Heart left ventricle (tissue), 16 donors: ENCODE measurements at regions of chr21 and their contacts with region 1.

Region 1: DNA sequence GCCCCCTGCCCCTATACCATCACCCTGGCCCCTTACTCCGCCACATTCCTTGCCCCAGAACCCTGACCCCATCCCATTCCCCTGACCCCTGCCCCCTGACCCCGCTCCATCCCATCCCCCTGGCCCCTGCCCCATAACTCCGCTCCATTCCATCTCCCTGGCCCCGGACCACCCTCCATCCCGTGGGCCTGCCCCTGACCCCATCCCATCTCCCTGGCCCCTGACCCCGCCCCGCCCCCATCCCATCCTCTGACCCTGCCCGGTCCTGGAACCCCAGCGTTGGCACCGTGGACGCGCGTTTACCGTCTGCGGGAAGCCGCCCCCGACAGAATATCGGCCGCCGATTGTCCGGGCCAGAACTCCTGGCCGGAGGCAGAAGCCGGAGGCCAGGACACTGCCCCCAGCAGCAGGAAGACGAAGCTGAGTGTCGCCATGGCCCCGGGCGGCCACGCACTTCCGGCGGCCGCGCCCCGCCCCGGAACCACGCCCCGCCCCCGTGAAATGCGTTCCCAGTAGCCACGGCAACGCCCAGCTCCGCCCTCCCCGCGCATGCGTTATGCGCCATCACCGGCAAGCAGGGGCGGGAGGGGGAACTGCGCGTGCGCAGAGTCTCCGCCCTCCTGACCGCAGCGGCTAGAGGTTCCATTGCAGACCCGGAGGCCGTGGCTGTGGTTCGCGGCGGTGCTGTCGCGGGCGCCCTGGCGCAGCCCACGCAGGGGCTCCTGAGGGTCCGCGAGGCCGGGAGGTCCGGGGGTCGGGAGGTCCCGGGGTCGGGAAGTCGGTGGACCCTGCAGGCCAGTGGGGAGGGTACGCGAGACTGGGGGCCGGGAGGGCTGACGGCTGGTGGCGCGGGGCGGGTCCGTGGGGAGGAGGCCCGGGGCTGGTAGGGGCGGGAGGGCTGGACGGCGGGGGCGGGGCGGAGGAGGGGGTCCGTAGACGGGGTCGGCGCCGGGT is at the start of gene POFUT2:
- DNase-seq: peak; percentile 97 to 99 (median 97)
- ATAC-seq: peak; percentile 83 to 93 (median 89)
- H3K4me3 ChIP-seq: peak within 1 kb of the TSS; percentile 47 to 91 (median 76)
- H3K27ac ChIP-seq: peak within 1 kb of the TSS; percentile 50 to 90 (median 80)
- H3K4me1 ChIP-seq: peaks cover 0 to 38% (median 25%) of the 10 kb centered on the region in 12 donors
- H3K27me3 ChIP-seq: no peaks in the 10 kb centered on the region
- CTCF ChIP-seq: no peak
- POLR2A ChIP-seq: peak; percentile 37 to 88
- total RNA-seq, gene POFUT2: 10.8 to 22.0 (median 18.5) TPM

Region 2: DNA sequence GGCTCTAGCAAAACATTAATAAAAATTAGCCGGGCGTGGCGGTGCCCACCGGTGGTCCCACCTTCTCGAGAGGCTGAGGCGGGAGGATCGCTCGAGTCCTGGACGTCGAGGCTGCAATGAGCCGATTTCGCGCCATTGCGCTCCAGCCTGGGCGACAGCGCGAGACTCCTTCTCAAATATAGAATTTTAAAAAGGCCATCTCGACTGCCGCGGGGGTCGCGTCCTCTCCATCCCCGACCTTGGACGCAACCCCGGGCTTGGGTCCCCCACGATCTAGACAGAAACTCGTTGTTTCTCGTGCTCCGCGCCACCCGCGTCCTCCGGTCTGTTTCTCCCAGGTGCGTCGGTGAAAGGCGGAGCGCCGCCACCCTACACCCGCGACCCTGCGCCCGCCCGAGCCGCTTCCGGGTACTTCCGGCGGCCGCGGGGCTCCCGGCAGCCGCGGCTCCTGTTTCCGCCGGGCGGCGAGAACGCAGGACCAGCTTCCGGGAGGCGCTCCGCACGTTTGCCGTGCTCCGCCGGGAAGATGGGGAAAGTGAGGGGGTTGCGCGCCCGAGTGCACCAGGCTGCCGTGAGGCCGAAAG is 348.1 kb before region 1 on chr21 and contains the start of gene SLX9:
- intact Hi-C with region 1: loop called in 1 of 10 experiments (anchors 10 kb)
- DNase-seq: peak; percentile 72 to 90 (median 83)
- ATAC-seq: peak; percentile 58 to 92 (median 87)
- H3K4me3 ChIP-seq: peak within 1 kb of the TSS; percentile 74 to 99 (median 82)
- H3K27ac ChIP-seq: peak within 1 kb of the TSS; percentile 9 to 88 (median 78)
- H3K4me1 ChIP-seq: peaks cover 0 to 37% (median 29%) of the 10 kb centered on the region in 12 donors
- H3K27me3 ChIP-seq: peaks cover 0 to 5% (median 0%) of the 10 kb centered on the region in 9 donors
- CTCF ChIP-seq: no peak
- POLR2A ChIP-seq: peak in 1 of 2 donors; percentile 70
- total RNA-seq, gene SLX9: 38.5 to 53.1 (median 47.1) TPM

Region 3: GRCh38 chr21:45372732-45373355 is 85.1 kb after region 1 on chr21:
- intact Hi-C with region 1: no loop called
- DNase-seq: peak in 3 of 5 donors; percentile 8 to 46 (median 25)
- ATAC-seq: no peak
- H3K4me3 ChIP-seq: no peak overlapping the region
- H3K27ac ChIP-seq: no peak overlapping the region
- H3K4me1 ChIP-seq: peaks cover 0 to 7% (median 0%) of the 10 kb centered on the region in 12 donors
- H3K27me3 ChIP-seq: no peaks in the 10 kb centered on the region
- CTCF ChIP-seq: no peak
- POLR2A ChIP-seq: no peak

Region 4: GRCh38 chr21:45386721-45387371 is 99.1 kb after region 1 on chr21:
- intact Hi-C with region 1: loop called in 2 of 10 experiments (anchors 5 kb)
- DNase-seq: peak; percentile 36 to 70 (median 58)
- ATAC-seq: peak; percentile 48 to 73 (median 68)
- H3K4me3 ChIP-seq: no peak overlapping the region
- H3K27ac ChIP-seq: peak overlapping the region in 9 of 12 donors; percentile 5 to 56 (median 34)
- H3K4me1 ChIP-seq: peaks cover 0 to 21% (median 17%) of the 10 kb centered on the region in 12 donors
- H3K27me3 ChIP-seq: no peaks in the 10 kb centered on the region
- CTCF ChIP-seq: peak in 10 of 12 donors; percentile 15 to 52 (median 39)
- POLR2A ChIP-seq: no peak

Region 5: GRCh38 chr21:45542242-45542666 is 254.5 kb after region 1 on chr21 and contains the start of gene SLC19A1:
- intact Hi-C with region 1: loop called in 1 of 10 experiments (anchors 10 kb)
- DNase-seq: peak; percentile 65 to 89 (median 74)
- ATAC-seq: peak in 3 of 4 donors; percentile 67 to 89 (median 88)
- H3K4me3 ChIP-seq: peak within 1 kb of the TSS; percentile 41 to 88 (median 66)
- H3K27ac ChIP-seq: peak within 1 kb of the TSS in 6 of 12 donors; percentile 19 to 69 (median 46)
- H3K4me1 ChIP-seq: peaks cover 4 to 19% (median 11%) of the 10 kb centered on the region in 12 donors
- H3K27me3 ChIP-seq: no peaks in the 10 kb centered on the region
- CTCF ChIP-seq: peak in 11 of 12 donors; percentile 8 to 61 (median 43)
- POLR2A ChIP-seq: peak in 1 of 2 donors; percentile 33
- total RNA-seq, gene SLC19A1: 2.4 to 7.0 (median 3.0) TPM

Region 6: GRCh38 chr21:45596704-45597318 is 309.1 kb after region 1 on chr21:
- intact Hi-C with region 1: loop called in 3 of 10 experiments (anchors 5 to 10 kb)
- DNase-seq: peak; percentile 58 to 86 (median 66)
- ATAC-seq: peak in 3 of 4 donors; percentile 82 to 85 (median 85)
- H3K4me3 ChIP-seq: no peak overlapping the region
- H3K27ac ChIP-seq: no peak overlapping the region
- H3K4me1 ChIP-seq: peaks cover 0 to 3% (median 0%) of the 10 kb centered on the region in 12 donors
- H3K27me3 ChIP-seq: peaks cover 0 to 46% (median 5%) of the 10 kb centered on the region in 9 donors
- CTCF ChIP-seq: peak; percentile 63 to 88 (median 74)
- POLR2A ChIP-seq: no peak

Region 7: GRCh38 chr21:45820171-45821091 is 532.7 kb after region 1 on chr21:
- intact Hi-C with region 1: loop called in 3 of 10 experiments (anchors 5 to 10 kb)
- DNase-seq: peak; percentile 67 to 85 (median 69)
- ATAC-seq: peak; percentile 77 to 90 (median 86)
- H3K4me3 ChIP-seq: no peak overlapping the region
- H3K27ac ChIP-seq: no peak overlapping the region
- H3K4me1 ChIP-seq: peaks cover 0 to 5% (median 0%) of the 10 kb centered on the region in 12 donors
- H3K27me3 ChIP-seq: no peaks in the 10 kb centered on the region
- CTCF ChIP-seq: peak; percentile 69 to 84 (median 78)
- POLR2A ChIP-seq: no peak